Activated CD4-positive, alpha-beta memory T cell treated with anti-CD3 and anti-CD28 coated beads for 36 hours (primary cell): ENCODE measurements at regions of chr16 and their contacts with region 1.

Region 1: GRCh38 chr16:83116274-83116892 is 489.6 kb downstream of the CDH13 start:
- DNase-seq: no peak
- H3K4me3 Mint-ChIP-seq: no peak overlapping the region
- H3K27ac Mint-ChIP-seq: no peak overlapping the region
- H3K4me1 Mint-ChIP-seq: no peaks in the 10 kb centered on the region
- H3K27me3 Mint-ChIP-seq: no peaks in the 10 kb centered on the region

Region 2: GRCh38 chr16:83095941-83096692 is 20.3 kb before region 1 on chr16:
- CTCF ChIA-PET with region 1: no interaction called
- POLR2A ChIA-PET with region 1: no interaction called
- intact Hi-C with region 1: no loop called
- DNase-seq: no peak
- H3K4me3 Mint-ChIP-seq: no peak overlapping the region
- H3K27ac Mint-ChIP-seq: no peak overlapping the region
- H3K4me1 Mint-ChIP-seq: no peaks in the 10 kb centered on the region
- H3K27me3 Mint-ChIP-seq: peaks cover 2% of the 10 kb centered on the region

Region 3: DNA sequence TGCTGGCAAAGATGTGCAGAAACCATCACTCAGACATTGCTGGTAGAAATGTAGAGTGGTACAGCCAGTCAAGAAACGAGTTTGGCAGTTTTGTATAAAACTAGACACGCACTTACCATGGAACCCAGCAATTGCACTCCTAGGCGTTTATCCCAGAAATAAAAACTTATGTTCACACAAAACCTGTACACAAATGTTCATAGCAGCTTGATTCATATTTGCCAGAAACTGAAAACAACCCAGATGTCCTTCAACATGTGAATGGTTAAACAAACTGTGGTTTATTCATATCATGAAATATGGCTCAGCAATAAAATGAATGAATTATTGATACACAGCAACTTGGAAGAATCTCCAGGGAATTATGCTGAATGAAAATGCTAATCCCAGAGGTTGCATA is 80.4 kb after region 1 on chr16:
- CTCF ChIA-PET with region 1: no interaction called
- POLR2A ChIA-PET with region 1: no interaction called
- intact Hi-C with region 1: loop called (anchors 2 kb)
- DNase-seq: no peak
- H3K4me3 Mint-ChIP-seq: no peak overlapping the region
- H3K27ac Mint-ChIP-seq: no peak overlapping the region
- H3K4me1 Mint-ChIP-seq: no peaks in the 10 kb centered on the region
- H3K27me3 Mint-ChIP-seq: no peaks in the 10 kb centered on the region

Region 4: GRCh38 chr16:83552228-83552627 is 435.8 kb after region 1 on chr16:
- CTCF ChIA-PET with region 1: no interaction called
- POLR2A ChIA-PET with region 1: no interaction called
- intact Hi-C with region 1: no loop called
- DNase-seq: no peak
- H3K4me3 Mint-ChIP-seq: no peak overlapping the region
- H3K27ac Mint-ChIP-seq: no peak overlapping the region
- H3K4me1 Mint-ChIP-seq: no peaks in the 10 kb centered on the region
- H3K27me3 Mint-ChIP-seq: no peaks in the 10 kb centered on the region